ENCODE measurements at regions of chr18 and their contacts with region 1.

Region 1: DNA sequence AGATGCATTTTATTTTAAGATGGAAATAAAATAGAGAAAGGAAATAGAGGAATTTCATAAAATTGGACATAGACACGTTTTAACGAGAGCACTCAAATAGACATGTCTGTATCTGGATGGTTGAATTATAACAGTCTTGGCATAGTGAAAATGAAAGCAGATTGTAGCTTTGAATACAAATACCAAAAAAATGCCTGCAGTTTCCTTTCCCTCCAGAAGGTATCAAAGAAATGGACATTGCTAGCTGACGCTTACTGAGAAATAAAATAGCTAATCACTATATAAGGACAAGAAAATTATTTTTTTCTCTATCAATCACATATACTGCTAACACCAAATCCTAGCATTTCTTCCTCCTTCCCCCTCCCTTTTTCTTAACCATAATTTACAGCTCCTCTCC is 11.4 kb upstream of the MAPRE2 start:
- DNase-seq: no peak
- H3K4me3 ChIP-seq: no peak overlapping the region
- H3K27ac ChIP-seq: no peak overlapping the region
- H3K4me1 ChIP-seq: peaks cover 6% of the 10 kb centered on the region
- H3K27me3 ChIP-seq: no peaks in the 10 kb centered on the region
- CTCF ChIP-seq: no peak
- POLR2A ChIP-seq: no peak

Region 2: GRCh38 chr18:35143622-35144596 is 114.1 kb after region 1 on chr18:
- intact Hi-C with region 1: loop called (anchors 10 kb)
- DNase-seq: peak; percentile 55
- H3K4me3 ChIP-seq: no peak overlapping the region
- H3K27ac ChIP-seq: no peak overlapping the region
- H3K4me1 ChIP-seq: no peaks in the 10 kb centered on the region
- H3K27me3 ChIP-seq: no peaks in the 10 kb centered on the region
- CTCF ChIP-seq: peak in 2 of 3 experiments; percentile 49 to 57
- POLR2A ChIP-seq: no peak